Ascending aorta (tissue), 2 donors: ENCODE measurements at regions of chr11 and their contacts with region 1.

Region 1: GRCh38 chr11:112297248-112297866 is 36.7 kb upstream of the PLET1 start:
- DNase-seq: no peak
- H3K4me3 ChIP-seq: no peak overlapping the region
- H3K27ac ChIP-seq: peak overlapping the region; percentile 15 to 88
- H3K4me1 ChIP-seq: peaks cover 20 to 40% of the 10 kb centered on the region in 2 donors
- H3K27me3 ChIP-seq: no peaks in the 10 kb centered on the region
- CTCF ChIP-seq: no peak

Region 2: DNA sequence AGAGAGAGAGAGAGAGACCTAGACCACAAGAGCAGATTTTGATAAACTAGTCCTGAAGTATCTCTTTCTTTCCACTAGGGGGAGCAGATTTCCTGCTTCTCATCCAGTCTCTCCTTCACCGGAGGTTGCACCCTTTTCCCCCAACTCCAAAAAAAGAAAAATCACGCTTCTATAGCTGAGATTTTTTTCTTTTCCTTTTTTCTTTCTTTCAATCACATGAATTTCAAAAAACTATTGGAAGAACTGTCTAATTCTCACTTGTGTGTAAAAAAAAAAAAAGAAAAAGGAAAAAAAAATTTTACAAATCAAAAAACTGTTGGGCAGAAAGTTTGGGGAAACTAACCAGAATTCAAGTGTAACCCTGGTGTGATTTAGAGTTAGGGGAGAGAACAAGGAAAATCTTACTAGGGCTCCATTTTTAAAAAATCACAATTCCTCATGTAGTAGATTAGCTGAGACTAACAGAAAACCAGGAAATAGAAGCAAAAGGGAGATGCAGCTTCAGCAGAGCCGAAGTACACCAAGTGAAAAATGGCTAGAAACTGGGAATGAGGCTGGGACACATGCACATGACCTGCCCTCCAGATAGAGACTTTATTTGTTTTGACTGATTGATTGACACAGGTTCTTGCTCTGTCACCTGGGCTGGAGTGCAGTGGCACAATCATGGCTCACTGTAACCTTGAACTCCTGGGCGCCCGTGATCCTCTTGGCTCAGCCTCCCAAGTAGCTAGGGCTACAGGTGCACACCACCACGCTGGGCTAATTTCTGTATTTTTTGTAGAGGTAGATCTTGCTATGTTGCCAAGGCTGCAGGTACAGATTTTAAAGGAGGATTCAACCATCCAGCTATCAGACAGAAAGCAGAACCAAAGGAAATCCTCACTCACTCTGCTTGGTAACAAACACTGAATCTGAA is 183.6 kb before region 1 on chr11:
- intact Hi-C with region 1: no loop called
- DNase-seq: no peak
- H3K4me3 ChIP-seq: peak overlapping the region in 1 of 2 donors; percentile 25
- H3K27ac ChIP-seq: no peak overlapping the region
- H3K4me1 ChIP-seq: peaks cover 0 to 4% of the 10 kb centered on the region in 2 donors
- H3K27me3 ChIP-seq: no peaks in the 10 kb centered on the region
- CTCF ChIP-seq: peak; percentile 56 to 66 (median 56)

Region 3: GRCh38 chr11:112318193-112318592 is 20.8 kb after region 1 on chr11:
- intact Hi-C with region 1: loop called (anchors 2 kb)
- DNase-seq: no peak
- H3K4me3 ChIP-seq: no peak overlapping the region
- H3K27ac ChIP-seq: peak overlapping the region; percentile 66 to 75
- H3K4me1 ChIP-seq: peaks cover 0 to 32% of the 10 kb centered on the region in 2 donors
- H3K27me3 ChIP-seq: no peaks in the 10 kb centered on the region
- CTCF ChIP-seq: no peak

Region 4: DNA sequence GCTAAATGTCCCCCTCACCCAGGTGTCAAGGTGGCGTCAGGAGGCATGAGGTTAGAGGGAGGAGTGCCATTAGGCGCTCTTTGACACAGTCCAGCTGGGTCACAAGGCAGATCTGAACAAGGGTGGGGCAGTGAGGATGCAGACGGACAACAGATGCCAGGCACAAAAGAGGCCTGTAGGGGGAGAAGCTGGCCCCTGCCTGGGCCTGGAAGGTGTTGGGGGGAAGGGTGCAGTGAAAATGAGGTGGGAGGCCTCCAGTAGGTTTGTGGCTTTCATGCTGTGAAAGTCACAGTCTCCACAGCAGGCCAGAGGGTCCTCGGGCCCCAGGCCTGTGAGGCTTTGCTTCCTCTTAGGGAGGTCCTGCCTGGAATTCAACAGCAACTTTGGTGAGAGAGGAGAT is 48.4 kb after region 1 on chr11:
- intact Hi-C with region 1: no loop called
- DNase-seq: no peak
- H3K4me3 ChIP-seq: no peak overlapping the region
- H3K27ac ChIP-seq: no peak overlapping the region
- H3K4me1 ChIP-seq: peaks cover 0 to 2% of the 10 kb centered on the region in 2 donors
- H3K27me3 ChIP-seq: no peaks in the 10 kb centered on the region
- CTCF ChIP-seq: no peak

Region 5: DNA sequence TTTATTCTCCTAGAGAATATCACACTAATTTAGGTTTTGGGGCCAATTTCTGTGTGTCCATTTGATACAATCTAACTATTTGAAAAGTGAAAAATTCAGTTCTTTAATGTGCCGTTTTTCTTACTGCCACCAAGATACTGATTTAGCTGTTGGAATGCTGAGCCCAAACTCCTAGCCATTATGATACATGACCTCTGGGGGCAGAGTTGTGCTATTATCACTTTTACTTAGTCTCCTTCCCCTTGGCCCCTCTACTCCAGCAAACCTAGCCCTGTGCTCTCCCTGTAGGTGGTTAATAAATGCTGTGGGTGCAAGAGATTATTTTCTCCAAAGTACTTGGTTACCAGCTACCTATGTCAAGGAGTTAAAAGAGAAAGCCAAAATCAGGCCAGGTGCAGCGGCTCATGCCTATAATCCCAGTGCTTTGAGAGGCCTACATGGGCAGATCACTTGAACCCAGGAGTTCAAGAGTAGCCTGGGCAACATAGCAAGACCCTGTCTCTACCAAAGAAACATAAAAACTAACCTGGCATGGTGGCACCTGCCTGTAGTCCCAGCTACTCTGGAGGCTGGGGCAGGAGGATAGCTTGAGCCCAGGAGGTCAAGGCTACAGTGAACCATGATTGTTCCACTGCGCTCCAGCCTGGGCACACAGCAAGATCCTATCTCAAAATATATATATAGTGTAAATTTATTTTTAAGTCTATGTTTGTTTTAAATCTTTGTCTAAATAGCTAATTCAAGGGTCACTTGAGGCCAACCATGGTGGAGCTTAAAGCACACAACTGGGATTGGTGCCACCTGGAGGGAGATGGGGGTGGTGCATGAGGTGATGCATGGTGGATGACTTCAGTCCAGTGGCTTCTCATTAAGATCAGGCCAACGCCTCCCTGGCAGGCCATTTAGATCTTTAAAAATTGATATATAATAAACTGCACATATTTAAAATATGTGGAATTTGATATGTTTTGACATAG is 156.5 kb after region 1 on chr11:
- intact Hi-C with region 1: no loop called
- DNase-seq: no peak
- H3K4me3 ChIP-seq: no peak overlapping the region
- H3K27ac ChIP-seq: no peak overlapping the region
- H3K4me1 ChIP-seq: no peaks in the 10 kb centered on the region
- H3K27me3 ChIP-seq: no peaks in the 10 kb centered on the region
- CTCF ChIP-seq: peak in 2 of 3 experiments; percentile 38 to 39